Posterior vena cava (tissue), 2 donors: ENCODE measurements at regions of chr16 and their contacts with region 1.

Region 1: DNA sequence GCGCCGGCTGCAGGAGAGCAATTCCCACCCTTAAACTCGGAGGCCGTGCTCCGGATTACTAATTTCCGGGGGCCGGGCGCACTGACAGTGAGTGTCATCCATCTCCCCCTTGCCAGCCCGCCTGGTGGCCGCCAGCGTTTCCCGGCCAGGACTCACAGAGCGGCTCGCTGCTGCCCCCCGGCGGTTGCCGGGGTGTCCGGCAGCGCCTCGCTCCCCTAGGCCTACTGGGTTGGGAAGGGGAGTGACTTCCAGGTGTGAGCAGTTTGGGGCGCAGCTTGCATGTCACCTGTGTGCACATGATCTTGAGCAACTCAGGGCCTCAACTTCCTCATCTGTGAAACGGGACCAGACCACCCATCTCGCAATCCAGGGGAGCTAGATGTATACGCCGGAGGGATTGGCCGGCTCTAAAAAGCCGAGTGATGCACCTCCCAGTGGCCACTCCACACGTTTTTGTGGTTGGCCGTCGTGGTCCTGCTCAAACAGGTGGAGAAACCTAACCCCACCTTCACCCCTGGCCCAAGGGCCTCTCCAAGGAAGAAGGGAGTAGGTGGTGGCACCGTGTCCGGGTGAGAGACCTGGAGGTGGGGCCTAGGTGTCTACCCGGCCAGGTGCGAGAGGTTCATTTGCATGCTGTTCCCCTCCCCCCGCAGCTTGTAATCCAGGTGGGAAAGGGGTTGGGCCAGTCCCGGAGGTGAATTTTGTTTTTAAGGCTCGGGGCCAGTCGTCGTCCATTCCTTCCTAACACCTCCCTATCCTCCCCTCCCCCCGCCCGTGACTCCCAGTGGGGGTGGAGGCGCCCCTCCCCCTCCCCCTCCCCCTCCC is 2.4 kb upstream of the GSE1 start:
- DNase-seq: peak; percentile 97

Region 2: GRCh38 chr16:85114909-85115567 is 495.7 kb before region 1 on chr16:
- intact Hi-C with region 1: loop called in 1 of 2 experiments (anchors 10 kb)
- DNase-seq: peak; percentile 95

Region 3: DNA sequence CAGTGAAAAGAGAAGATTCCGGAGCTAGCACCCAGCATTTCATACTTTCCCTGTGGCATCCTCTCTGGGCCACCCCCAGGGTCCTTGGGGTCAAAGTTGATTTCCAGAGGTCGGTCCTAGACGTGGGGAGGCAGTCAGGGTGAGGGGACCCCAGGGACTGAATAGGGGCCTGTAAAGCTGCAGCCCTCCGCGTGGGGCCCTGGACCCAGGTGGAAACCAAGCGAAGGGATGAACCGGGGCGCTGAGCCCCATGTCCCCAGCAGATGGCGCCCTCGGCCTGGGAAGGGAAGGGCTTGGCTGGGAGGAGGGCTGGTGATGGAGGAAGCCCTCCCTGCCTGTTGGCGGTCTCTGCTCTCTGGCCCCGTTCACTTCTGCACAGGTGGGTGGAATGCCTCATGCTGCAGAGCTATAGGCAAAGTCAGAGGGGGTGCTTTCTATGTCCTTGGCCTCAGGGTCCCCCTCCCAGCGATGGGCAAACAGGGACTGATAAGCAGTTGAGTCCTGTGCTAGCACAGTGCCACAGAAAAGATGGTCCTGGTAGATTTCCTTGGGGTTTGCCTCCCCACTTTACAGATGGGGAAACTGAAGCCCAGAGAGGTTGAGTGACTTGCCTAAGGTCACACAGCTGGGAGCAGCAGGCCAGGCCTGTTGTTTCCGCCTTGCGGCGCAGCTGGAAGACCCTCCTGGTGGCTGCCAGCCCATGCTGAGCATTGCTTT is 335.0 kb before region 1 on chr16:
- intact Hi-C with region 1: loop called in 1 of 2 experiments (anchors 10 kb)
- DNase-seq: peak; percentile 92

Region 4: DNA sequence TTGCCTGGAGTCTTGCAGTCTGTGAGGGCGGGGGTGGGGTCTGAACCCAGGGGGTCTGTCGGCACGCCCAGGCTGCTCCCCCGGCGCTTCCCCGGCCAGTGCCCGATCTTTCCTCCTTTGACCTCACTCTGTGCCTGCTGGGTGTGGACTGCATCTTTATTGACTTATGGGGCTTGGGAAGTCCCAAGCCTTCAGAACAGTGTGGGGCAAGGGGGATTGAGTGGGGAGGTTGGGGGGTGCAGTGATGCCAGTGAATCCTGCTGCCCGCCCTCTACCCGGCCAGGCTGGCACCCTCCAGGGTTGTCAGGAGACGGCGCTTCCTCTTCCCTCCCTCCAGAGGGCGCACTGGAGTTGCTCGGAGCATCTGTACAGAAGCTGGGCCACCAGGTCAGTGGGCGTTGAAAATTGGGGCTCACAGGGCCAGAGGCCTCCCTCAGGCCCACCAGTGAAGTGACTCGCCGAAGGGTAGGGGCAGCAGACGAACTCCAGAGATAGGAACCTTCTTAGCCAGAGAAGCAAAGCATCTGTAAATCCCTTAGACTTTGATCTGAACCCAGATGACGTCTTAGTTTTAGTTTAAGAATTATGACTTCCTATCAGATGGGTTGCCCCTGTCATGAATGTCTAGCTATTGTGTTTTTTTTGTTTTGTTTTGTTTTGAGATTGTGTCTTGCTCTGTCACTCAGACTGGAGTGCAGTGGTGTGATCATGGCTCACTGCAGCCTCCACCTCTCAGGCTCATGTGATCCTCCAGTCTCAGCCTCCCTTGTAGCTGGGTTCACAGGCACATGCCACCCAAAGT is 313.7 kb before region 1 on chr16:
- intact Hi-C with region 1: loop called (anchors 10 kb)
- DNase-seq: no peak

Region 5: DNA sequence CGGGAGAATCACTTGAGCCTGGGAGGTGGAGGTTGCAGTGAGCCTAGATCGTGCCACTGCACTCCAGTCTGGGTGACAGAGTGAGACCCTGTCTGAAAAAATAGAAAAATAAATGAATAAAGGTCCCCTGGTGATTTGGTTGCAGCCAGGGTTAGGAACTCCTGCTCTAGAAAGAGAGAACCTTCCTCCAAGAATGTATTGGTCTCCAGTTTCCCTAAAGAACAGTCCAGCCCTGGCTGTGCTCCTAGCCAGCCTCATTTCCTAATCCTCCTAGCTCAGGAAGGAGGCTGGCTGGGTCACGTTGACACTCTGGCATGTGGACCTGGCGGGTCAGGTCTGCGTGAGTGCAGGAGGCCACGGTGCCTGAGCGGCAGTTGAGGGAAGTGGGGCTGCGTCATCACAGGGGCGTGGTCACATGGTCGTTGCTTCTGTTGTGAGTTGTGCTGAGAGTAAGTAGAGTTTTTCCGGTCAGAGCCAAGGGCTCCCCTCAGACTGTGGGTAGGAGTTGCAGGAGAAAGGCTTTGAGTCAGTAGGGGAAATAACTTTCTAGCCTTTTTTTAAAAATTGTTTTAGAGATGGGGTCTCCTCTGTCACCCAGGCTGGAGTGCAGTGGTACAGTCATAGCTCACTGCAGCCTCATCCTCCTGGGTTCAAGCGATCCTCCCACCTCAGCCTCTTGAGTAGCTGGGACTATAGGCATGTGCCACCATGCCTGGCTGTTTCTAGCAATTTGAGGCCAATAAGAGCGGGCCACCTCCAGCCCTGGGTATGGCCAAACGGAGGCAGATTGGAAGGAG is 304.5 kb before region 1 on chr16:
- intact Hi-C with region 1: loop called in 1 of 2 experiments (anchors 10 kb)
- DNase-seq: peak; percentile 98

Region 6: DNA sequence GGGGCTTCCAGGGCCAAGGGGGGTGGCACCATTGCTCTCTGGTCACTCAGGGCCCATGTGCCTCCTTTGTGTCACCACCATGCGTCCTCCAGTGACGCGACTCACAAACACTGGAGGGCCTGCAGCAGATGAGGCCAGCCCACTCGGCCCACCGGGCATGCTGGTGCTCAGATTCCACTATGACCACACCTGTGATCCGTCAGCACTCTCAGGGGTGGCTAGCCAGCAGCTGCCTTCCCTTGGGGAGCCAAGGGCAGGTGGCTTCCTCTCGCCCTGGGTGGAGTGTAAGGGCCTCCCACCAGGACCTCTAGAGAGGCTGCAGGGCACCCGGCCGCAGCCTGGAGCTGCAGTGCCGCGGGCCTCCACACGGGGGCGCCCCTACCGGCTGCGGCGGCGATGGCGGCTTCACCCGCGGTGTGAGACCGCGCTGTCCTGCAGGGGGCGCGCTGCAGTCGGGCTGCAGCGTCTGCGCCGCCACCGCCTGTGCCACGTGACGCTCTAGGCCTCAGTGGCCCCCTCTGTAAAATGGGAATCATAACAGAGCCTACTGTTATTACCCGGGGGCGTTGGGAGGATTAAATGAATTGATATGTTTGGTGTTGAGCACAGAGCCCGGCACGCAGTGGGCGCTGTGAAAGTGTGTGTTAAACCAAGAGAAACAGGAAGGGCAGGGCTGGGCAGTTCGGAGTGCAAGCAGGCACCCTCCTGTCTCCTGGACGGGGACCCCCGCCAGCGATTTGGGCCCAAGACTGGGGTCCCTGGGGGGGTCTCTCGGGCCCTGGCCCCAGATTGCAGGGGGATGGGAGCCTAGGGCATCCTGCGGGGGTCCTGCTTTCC is 190.0 kb before region 1 on chr16:
- intact Hi-C with region 1: loop called in 1 of 2 experiments (anchors 2 kb)
- DNase-seq: peak; percentile 86

Region 7: DNA sequence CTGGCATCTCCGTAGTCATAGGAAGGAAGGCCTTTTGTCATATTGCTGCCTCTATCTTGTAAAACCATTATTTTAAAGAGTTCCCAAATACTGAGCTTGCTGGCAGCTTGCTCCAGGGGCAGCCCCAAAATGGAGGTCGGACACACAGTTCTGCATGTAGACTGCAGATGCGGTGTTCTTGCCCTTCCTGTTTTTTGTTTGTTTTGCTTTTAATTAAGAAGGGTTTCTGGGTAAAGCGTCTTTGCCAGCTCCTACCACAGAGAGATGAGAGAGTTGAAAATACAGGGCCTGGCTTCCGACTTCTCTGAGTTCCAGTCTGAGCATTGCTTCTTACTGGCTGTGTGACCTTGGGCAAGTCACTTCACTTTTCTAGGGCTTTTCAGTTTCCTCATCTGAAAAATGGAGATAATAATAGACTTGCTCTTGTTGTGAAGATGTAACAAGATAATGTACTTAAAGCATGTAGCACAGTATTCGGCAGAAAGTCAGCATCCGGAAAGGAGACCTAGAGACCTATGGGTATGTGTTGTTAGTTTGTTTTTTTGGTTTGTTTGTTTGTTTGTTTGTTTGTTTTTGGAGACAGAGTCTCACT is 65.4 kb before region 1 on chr16:
- intact Hi-C with region 1: loop called in 1 of 2 experiments (anchors 2 kb)
- DNase-seq: no peak